ENCODE measurements at regions of chr2 and their contacts with region 1.

Region 1: GRCh38 chr2:100818606-100819369 is 1.2 kb upstream of the NPAS2 start:
- DNase-seq: peak; percentile 72
- ATAC-seq: peak; percentile 40
- H3K4me3 ChIP-seq: peak overlapping the region; percentile 70
- H3K27ac ChIP-seq: peak overlapping the region; percentile 33; the same call in 1 of the 2 replicates
- H3K4me1 ChIP-seq: peaks cover 2% of the 10 kb centered on the region; the same call in 1 of the 2 replicates
- H3K27me3 ChIP-seq: no peaks in the 10 kb centered on the region
- CTCF ChIP-seq: peak; percentile 32
- POLR2A ChIP-seq: no peak; the same call in 1 of the 2 replicates
- RAD21 ChIP-seq: peak; percentile 17

Region 2: GRCh38 chr2:100610381-100610831 is 208.4 kb before region 1 on chr2:
- CTCF ChIA-PET with region 1: no interaction called
- POLR2A ChIA-PET with region 1: no interaction called
- dilution Hi-C with region 1: no loop called
- in situ Hi-C with region 1: loop called (anchors 25 kb)
- intact Hi-C with region 1: loop called (anchors 2 kb)
- DNase-seq: peak; percentile 49
- ATAC-seq: peak; percentile 93
- H3K4me3 ChIP-seq: no peak overlapping the region
- H3K27ac ChIP-seq: no peak overlapping the region
- H3K4me1 ChIP-seq: no peaks in the 10 kb centered on the region
- H3K27me3 ChIP-seq: peaks cover 20% of the 10 kb centered on the region
- CTCF ChIP-seq: peak; percentile 64
- POLR2A ChIP-seq: 0 out of 2 replicates have a peak, but pooled peaks have one; percentile 23
- RAD21 ChIP-seq: peak; percentile 83

Region 3: DNA sequence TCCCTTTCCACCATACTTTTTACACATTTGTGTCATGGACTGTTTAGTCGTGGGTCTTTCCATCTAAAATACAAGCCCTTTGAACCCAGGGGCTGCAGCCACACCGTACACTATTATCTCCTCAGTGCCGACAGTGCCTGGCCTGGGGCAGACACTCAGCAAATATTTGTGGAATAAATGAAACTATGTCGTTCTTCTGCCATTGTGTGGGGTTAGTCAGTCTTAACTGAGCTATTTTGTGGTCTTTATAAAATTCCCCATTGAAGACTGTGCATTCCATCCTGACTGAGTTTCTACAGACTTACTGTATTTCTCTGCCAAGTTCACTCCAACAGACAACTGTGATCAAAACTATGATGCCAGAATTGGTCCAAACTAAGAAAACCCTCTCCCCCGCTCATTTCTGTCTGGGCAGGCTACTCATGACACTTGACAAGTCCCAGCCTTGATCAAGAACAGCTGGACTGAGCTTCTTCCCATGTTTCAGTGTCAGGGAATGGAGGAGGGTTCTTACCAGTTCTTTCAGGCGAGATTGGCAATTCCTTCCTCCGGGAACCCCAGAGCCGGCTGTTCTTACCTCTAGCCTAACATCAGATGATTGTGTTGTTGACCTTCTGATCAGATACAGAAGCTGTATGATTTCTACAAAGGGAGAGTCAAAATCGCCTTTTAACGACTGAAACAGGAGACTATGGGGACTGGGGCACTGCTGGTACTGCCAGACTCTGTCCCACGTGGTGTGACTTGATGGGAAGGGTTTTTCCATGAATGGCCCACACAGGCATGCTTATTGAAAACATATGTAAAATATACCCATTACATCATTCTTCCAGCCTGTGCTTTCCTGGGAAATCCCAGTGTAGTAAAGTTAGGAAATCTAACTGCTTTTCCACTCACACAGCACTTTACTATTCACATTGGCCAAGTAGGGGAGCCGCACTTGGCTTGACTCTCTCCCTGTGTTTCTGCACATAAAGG is 76.2 kb before region 1 on chr2:
- CTCF ChIA-PET with region 1: no interaction called
- POLR2A ChIA-PET with region 1: interaction called, 4 read pairs
- dilution Hi-C with region 1: no loop called
- in situ Hi-C with region 1: no loop called
- intact Hi-C with region 1: loop called (anchors 1 kb)
- DNase-seq: peak; percentile 98
- ATAC-seq: peak; percentile 91
- H3K4me3 ChIP-seq: no peak overlapping the region; the same call in 1 of the 2 replicates
- H3K27ac ChIP-seq: peak overlapping the region; percentile 74
- H3K4me1 ChIP-seq: peaks cover 16% of the 10 kb centered on the region
- H3K27me3 ChIP-seq: no peaks in the 10 kb centered on the region
- CTCF ChIP-seq: no peak
- POLR2A ChIP-seq: peak; percentile 68
- RAD21 ChIP-seq: peak; percentile 31

Region 4: DNA sequence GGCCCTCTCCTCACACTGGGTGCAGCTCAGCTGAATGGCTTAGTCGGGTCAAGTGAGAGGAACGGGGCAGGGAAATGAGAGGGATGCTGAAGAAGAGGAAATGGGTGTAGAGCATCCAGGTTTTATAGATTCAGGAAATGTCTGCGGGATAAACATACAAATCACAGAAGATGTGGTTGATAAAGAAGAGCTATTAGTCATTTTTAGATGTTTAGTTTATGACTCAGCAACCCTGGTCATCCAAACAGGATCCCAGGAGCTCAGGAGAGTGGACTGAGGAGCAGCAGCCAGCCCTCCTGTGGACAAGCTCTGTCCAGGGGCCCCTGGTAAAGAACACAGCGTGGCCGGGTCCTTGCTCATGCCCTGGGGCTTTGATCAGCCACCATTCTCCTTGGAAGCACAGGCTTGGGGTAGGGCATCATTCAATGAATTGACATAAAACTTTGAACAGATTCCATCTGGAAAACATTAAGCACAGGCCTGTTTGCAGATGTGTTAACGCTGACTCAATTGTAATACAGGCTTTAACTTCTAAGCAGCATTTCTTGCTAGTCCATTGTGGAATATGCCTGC is 84.1 kb after region 1 on chr2:
- CTCF ChIA-PET with region 1: no interaction called
- POLR2A ChIA-PET with region 1: no interaction called
- dilution Hi-C with region 1: no loop called
- in situ Hi-C with region 1: no loop called
- intact Hi-C with region 1: loop called (anchors 5 kb)
- DNase-seq: peak; percentile 97
- ATAC-seq: peak; percentile 96
- H3K4me3 ChIP-seq: no peak overlapping the region
- H3K27ac ChIP-seq: peak overlapping the region; percentile 86
- H3K4me1 ChIP-seq: peaks cover 16% of the 10 kb centered on the region
- H3K27me3 ChIP-seq: no peaks in the 10 kb centered on the region
- CTCF ChIP-seq: peak; percentile 27; the same call in 1 of the 2 replicates
- POLR2A ChIP-seq: no peak
- RAD21 ChIP-seq: peak; percentile 48

Region 5: DNA sequence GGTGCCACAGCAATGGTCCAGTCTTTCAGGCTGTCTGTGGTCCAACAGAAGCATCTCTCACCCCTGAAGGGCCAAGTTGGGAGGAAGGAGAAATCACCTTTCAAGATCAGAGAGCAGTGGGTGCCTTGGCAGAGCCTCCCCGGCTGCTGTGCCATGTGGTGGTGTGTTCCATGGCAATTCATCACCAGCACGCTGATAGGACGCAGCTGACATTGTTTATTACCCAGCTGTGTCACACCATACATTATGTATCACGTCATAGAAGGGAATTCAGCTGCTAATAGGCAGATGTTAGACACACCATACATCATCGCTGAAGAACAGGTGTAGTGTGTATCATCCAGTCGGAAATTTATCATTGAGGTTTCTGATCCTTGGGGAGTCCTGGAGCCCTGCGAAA is 153.7 kb after region 1 on chr2:
- CTCF ChIA-PET with region 1: no interaction called
- POLR2A ChIA-PET with region 1: no interaction called
- dilution Hi-C with region 1: no loop called
- in situ Hi-C with region 1: loop called (anchors 5 kb)
- intact Hi-C with region 1: no loop called
- DNase-seq: no peak
- ATAC-seq: no peak
- H3K4me3 ChIP-seq: no peak overlapping the region
- H3K27ac ChIP-seq: no peak overlapping the region
- H3K4me1 ChIP-seq: no peaks in the 10 kb centered on the region; the same call in 1 of the 2 replicates
- H3K27me3 ChIP-seq: no peaks in the 10 kb centered on the region
- CTCF ChIP-seq: no peak
- POLR2A ChIP-seq: no peak
- RAD21 ChIP-seq: no peak

Region 6: DNA sequence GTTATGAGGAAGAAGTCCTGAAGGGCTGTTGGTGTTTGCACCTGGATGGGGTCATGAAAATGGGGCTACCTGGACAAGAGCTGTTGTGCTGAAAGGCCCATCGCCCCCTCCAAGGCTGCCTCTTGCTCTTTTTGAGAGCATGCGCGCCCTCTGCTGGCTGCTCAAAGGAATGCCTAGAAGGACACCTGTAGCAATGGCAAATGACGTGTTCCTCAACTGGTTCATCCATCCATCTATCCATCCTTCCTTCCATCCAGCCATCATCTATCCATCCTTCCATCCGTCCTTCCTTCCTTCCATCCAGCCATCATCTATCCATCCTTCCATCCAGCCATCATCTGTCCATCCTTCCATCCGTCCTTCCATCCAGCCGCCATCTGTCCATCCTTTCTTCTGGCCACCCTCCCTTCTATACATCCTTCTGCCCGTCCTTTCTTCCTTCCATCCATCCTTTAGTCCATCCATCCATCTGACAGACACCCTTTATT is 166.1 kb after region 1 on chr2:
- CTCF ChIA-PET with region 1: no interaction called
- POLR2A ChIA-PET with region 1: no interaction called
- dilution Hi-C with region 1: no loop called
- in situ Hi-C with region 1: no loop called
- intact Hi-C with region 1: loop called (anchors 2 kb)
- DNase-seq: peak; percentile 69
- ATAC-seq: peak; percentile 82
- H3K4me3 ChIP-seq: no peak overlapping the region
- H3K27ac ChIP-seq: no peak overlapping the region
- H3K4me1 ChIP-seq: 0 out of 2 replicates have a peak, but pooled peaks cover 2% of the 10 kb centered on the region
- H3K27me3 ChIP-seq: no peaks in the 10 kb centered on the region
- CTCF ChIP-seq: peak; percentile 87
- POLR2A ChIP-seq: no peak
- RAD21 ChIP-seq: peak; percentile 96

Measured in IMR-90 (cell line).